Mammary epithelial cell (primary cell): ENCODE measurements at regions of chr3 and their contacts with region 1.

Region 1: GRCh38 chr3:186570096-186570940 is at the start of gene DNAJB11:
- DNase-seq: peak; percentile 100
- H3K4me3 ChIP-seq: peak within 1 kb of the TSS; percentile 66 to 93 (median 69)
- H3K27ac ChIP-seq: peak within 1 kb of the TSS; percentile 87
- H3K4me1 ChIP-seq: peaks cover 25% of the 10 kb centered on the region
- H3K27me3 ChIP-seq: no peaks in the 10 kb centered on the region
- CTCF ChIP-seq: no peak
- total RNA-seq, gene DNAJB11: 27.0 to 70.8 TPM

Region 2: DNA sequence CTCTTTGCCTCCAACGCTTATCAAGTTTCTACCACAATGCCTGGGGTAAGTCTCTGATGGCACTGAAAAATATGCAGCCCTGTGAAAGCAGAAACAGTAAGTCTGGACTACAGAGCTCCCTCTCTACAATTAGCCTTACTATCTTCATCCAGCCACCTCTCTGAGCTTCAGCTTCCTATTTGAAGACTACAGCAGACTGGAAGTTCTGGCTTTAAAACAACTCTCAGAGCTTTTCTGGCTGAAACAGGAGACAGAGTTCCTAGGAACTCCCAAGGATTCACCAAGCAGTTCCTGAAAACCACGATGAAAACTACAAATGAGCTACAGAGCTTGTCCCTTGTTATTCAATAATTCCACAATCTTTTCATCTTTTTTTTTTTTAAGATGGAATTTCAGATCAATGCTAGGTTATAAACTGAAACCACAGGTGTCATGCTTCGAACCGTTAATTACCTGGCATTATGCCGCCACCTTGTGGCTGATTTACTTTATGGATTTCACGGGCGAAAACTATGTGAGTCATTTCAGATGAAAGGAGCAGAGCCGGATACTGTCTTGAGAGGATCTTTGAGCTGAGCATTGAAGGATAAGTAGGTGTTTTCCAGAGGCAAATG is 30.0 kb before region 1 on chr3:
- CTCF ChIA-PET with region 1: interaction called, 11 read pairs
- dilution Hi-C with region 1: no loop called
- in situ Hi-C with region 1: no loop called
- intact Hi-C with region 1: no loop called
- DNase-seq: peak; percentile 78
- H3K4me3 ChIP-seq: no peak overlapping the region
- H3K27ac ChIP-seq: peak overlapping the region; percentile 4
- H3K4me1 ChIP-seq: peaks cover 17% of the 10 kb centered on the region
- H3K27me3 ChIP-seq: no peaks in the 10 kb centered on the region
- CTCF ChIP-seq: peak; percentile 64 to 66

Region 3: GRCh38 chr3:186589121-186589520 is 18.8 kb after region 1 on chr3:
- CTCF ChIA-PET with region 1: no interaction called
- dilution Hi-C with region 1: no loop called
- in situ Hi-C with region 1: no loop called
- intact Hi-C with region 1: loop called (anchors 1 kb)
- DNase-seq: peak; percentile 36
- H3K4me3 ChIP-seq: no peak overlapping the region
- H3K27ac ChIP-seq: peak overlapping the region; percentile 81
- H3K4me1 ChIP-seq: peaks cover 32% of the 10 kb centered on the region
- H3K27me3 ChIP-seq: no peaks in the 10 kb centered on the region
- CTCF ChIP-seq: peak; percentile 33 to 49

Region 4: DNA sequence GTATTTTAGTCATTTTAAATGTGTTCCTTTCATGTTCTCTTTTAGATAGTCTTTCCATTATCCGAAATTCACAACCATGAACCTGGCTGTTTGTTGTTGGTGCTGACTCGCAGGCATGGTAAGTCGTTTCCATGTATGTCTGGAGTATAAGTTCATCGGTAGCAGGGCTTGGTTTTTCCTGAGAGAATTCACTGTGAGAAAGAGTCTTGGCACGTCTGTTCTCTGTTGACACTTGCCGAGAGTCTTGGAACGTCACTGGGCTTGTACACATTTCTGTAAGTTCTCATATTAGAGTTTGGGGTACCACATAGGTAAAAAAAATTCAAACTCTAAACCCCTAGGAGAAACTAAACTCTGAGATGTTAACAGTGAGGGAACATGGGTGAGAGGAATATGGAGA is 183.7 kb after region 1 on chr3:
- CTCF ChIA-PET with region 1: no interaction called
- dilution Hi-C with region 1: no loop called
- in situ Hi-C with region 1: no loop called
- intact Hi-C with region 1: loop called (anchors 5 kb)
- DNase-seq: no peak
- H3K4me3 ChIP-seq: no peak overlapping the region
- H3K27ac ChIP-seq: peak overlapping the region; percentile 83
- H3K4me1 ChIP-seq: peaks cover 15% of the 10 kb centered on the region
- H3K27me3 ChIP-seq: no peaks in the 10 kb centered on the region
- CTCF ChIP-seq: no peak

Region 5: DNA sequence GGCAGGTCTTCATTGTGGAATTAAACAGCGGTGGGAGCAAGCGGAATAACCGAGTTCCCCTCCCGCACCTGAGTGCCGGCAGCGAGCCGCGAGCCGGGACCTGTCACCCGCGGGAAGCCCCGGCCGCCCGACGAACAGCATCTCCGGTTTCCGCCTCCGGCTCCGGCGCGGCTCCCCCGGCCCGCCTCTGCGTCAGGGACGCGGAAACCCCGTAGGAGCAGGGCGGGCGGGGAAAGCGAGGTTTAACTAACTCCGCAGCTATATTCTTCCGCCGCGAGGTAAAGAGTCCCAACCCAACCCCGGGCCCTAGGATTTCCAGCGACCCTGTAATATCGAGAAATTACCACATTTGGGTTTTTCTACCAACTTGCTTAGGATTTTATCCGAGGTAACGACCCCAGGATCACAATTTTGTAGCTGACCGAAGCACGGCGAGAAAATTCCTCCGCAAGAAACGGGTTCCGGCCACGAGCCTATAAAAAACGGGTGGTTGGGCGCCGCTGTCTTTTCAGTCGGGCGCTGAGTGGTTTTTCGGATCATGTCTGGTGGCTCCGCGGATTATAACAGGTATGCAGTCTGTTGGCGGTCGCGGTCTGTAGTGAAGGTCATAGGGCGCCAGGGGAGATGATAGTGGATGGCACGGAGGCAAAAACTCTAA is 212.9 kb after region 1 on chr3 and contains the start of gene EIF4A2:
- CTCF ChIA-PET with region 1: no interaction called
- dilution Hi-C with region 1: loop called (anchors 10 kb)
- in situ Hi-C with region 1: no loop called
- intact Hi-C with region 1: no loop called
- DNase-seq: peak; percentile 88
- H3K4me3 ChIP-seq: peak within 1 kb of the TSS; percentile 66 to 81 (median 77)
- H3K27ac ChIP-seq: peak within 1 kb of the TSS; percentile 96
- H3K4me1 ChIP-seq: peaks cover 24% of the 10 kb centered on the region
- H3K27me3 ChIP-seq: no peaks in the 10 kb centered on the region
- CTCF ChIP-seq: no peak
- total RNA-seq, gene EIF4A2: 291 to 441 TPM

Region 6: GRCh38 chr3:186806089-186807055 is 236.1 kb after region 1 on chr3 and contains the start of gene RFC4:
- CTCF ChIA-PET with region 1: no interaction called
- dilution Hi-C with region 1: loop called (anchors 5 kb)
- in situ Hi-C with region 1: no loop called
- intact Hi-C with region 1: loop called (anchors 5 kb)
- DNase-seq: peak; percentile 74
- H3K4me3 ChIP-seq: peak within 1 kb of the TSS; percentile 65 to 87 (median 71)
- H3K27ac ChIP-seq: peak within 1 kb of the TSS; percentile 72
- H3K4me1 ChIP-seq: peaks cover 16% of the 10 kb centered on the region
- H3K27me3 ChIP-seq: no peaks in the 10 kb centered on the region
- CTCF ChIP-seq: no peak
- total RNA-seq, gene RFC4: 12.3 to 27.5 TPM

Region 7: GRCh38 chr3:186821429-186822367 is 251.4 kb after region 1 on chr3:
- CTCF ChIA-PET with region 1: no interaction called
- dilution Hi-C with region 1: no loop called
- in situ Hi-C with region 1: no loop called
- intact Hi-C with region 1: loop called (anchors 1 kb)
- DNase-seq: peak; percentile 24
- H3K4me3 ChIP-seq: no peak overlapping the region
- H3K27ac ChIP-seq: no peak overlapping the region
- H3K4me1 ChIP-seq: peaks cover 7% of the 10 kb centered on the region
- H3K27me3 ChIP-seq: no peaks in the 10 kb centered on the region
- CTCF ChIP-seq: peak; percentile 39 to 70